Sciatic nerve (tissue), 2 donors: ENCODE measurements at regions of chr11 and their contacts with region 1.

Region 1: GRCh38 chr11:75896843-75897419 is 81.9 kb downstream of the UVRAG start:
- DNase-seq: no peak
- ATAC-seq: peak; percentile 61

Region 2: GRCh38 chr11:75839851-75840250 is 57.1 kb before region 1 on chr11:
- intact Hi-C with region 1: no loop called
- DNase-seq: no peak
- ATAC-seq: no peak

Region 3: DNA sequence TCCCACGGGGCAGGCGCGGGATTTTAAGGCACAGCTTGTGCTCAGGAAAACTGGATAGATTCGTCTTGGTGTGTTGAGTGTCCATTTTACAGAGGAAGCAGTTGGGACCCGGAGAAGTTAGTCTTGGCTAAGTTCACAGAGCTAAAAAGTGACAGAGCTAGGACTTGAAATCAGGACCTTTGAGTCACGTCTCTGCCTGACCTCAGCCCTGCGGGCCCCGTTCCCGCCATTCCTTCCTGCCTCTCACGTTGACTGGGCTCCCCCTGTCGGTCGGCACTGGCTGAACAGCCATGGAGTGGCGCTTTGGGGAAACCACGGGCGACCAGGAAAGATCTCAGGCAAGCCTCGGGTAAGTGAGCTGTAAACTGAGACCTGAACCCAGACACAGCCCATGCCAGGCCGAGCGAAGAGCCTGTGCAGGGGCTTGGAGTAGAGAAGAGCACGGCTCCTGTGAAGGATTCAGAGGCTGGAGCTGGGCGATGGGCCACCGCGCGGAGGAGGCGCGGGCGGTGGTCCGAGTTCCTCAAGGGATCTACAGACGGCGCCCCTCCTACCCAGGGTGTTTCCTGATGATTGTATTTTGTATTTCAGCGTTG is 255.3 kb after region 1 on chr11:
- intact Hi-C with region 1: loop called (anchors 5 kb)
- DNase-seq: peak; percentile 95
- ATAC-seq: peak; percentile 95

Region 4: GRCh38 chr11:76318744-76319384 is 421.9 kb after region 1 on chr11:
- intact Hi-C with region 1: loop called (anchors 10 kb)
- DNase-seq: peak; percentile 91
- ATAC-seq: peak; percentile 90